Activated CD4-positive, alpha-beta T cell treated with anti-CD3 and anti-CD28 coated beads for 36 hours (primary cell): ENCODE measurements at regions of chr6 and their contacts with region 1.

Region 1: GRCh38 chr6:42745707-42746462 is at the start of gene TBCC:
- DNase-seq: peak; percentile 97
- ATAC-seq: peak; percentile 84
- H3K4me3 Mint-ChIP-seq: peak within 1 kb of the TSS; percentile 84
- H3K27ac Mint-ChIP-seq: peak within 1 kb of the TSS; percentile 100
- H3K4me1 Mint-ChIP-seq: peaks cover 27% of the 10 kb centered on the region
- H3K27me3 Mint-ChIP-seq: no peaks in the 10 kb centered on the region
- total RNA-seq, gene TBCC: 14.7 to 15.3 TPM

Region 2: DNA sequence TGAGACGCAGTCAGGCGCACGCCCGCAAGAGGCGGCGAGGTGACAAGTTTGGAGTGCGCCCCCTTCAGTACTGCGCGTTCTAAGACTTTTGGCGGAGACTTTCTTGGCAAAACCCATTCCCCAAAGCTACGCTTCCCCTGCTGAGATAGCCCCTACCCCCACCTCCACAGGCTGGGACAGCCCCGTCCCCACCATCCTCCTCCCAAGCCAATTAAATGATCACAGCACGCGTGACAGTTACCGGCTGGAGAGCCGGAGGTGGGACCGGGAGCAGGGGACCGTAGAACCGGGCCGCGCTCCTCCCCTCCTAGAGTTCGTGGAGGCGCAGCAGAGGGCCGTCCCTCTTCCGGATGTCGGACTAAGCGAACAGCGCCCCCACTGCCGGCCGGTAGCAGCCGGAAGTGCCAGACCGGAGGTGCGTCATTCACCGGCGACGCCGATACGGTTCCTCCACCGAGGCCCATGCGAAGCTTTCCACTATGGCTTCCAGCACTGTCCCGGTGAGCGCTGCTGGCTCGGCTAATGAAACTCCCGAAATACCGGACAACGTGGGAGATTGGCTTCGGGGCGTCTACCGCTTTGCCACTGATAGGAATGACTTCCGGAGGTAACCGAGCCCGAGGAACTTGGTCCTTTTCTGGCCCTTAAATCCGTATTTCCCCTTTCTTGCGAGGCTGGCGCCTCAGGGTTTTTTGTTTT is 958.5 kb before region 1 on chr6 and contains the start of gene TOMM6:
- CTCF ChIA-PET with region 1: no interaction called
- POLR2A ChIA-PET with region 1: interaction called, 3 read pairs
- intact Hi-C with region 1: loop called in 1 of 2 experiments (anchors 1 kb)
- DNase-seq: peak; percentile 98
- ATAC-seq: peak; percentile 86
- H3K4me3 Mint-ChIP-seq: peak within 1 kb of the TSS; percentile 96
- H3K27ac Mint-ChIP-seq: peak within 1 kb of the TSS; percentile 98
- H3K4me1 Mint-ChIP-seq: peaks cover 19% of the 10 kb centered on the region
- H3K27me3 Mint-ChIP-seq: peaks cover 2% of the 10 kb centered on the region
- total RNA-seq, gene TOMM6: 282 to 345 TPM

Region 3: GRCh38 chr6:42217519-42218367 is 528.1 kb before region 1 on chr6 and contains the start of gene MRPS10:
- CTCF ChIA-PET with region 1: interaction called, 3 read pairs
- POLR2A ChIA-PET with region 1: no interaction called
- intact Hi-C with region 1: loop called in 1 of 2 experiments (anchors 5 kb)
- DNase-seq: peak; percentile 95
- ATAC-seq: peak; percentile 99
- H3K4me3 Mint-ChIP-seq: peak within 1 kb of the TSS; percentile 100
- H3K27ac Mint-ChIP-seq: peak within 1 kb of the TSS; percentile 95
- H3K4me1 Mint-ChIP-seq: peaks cover 32% of the 10 kb centered on the region
- H3K27me3 Mint-ChIP-seq: no peaks in the 10 kb centered on the region
- total RNA-seq, gene MRPS10: 35.2 to 36.2 TPM

Region 4: GRCh38 chr6:42771741-42772100 is 25.8 kb after region 1 on chr6:
- CTCF ChIA-PET with region 1: interaction called, 11 read pairs
- POLR2A ChIA-PET with region 1: interaction called, 26 read pairs
- intact Hi-C with region 1: loop called (anchors 1 kb)
- DNase-seq: no peak
- ATAC-seq: no peak
- H3K4me3 Mint-ChIP-seq: peak overlapping the region; percentile 70
- H3K27ac Mint-ChIP-seq: peak overlapping the region; percentile 99
- H3K4me1 Mint-ChIP-seq: peaks cover 58% of the 10 kb centered on the region
- H3K27me3 Mint-ChIP-seq: no peaks in the 10 kb centered on the region

Region 5: DNA sequence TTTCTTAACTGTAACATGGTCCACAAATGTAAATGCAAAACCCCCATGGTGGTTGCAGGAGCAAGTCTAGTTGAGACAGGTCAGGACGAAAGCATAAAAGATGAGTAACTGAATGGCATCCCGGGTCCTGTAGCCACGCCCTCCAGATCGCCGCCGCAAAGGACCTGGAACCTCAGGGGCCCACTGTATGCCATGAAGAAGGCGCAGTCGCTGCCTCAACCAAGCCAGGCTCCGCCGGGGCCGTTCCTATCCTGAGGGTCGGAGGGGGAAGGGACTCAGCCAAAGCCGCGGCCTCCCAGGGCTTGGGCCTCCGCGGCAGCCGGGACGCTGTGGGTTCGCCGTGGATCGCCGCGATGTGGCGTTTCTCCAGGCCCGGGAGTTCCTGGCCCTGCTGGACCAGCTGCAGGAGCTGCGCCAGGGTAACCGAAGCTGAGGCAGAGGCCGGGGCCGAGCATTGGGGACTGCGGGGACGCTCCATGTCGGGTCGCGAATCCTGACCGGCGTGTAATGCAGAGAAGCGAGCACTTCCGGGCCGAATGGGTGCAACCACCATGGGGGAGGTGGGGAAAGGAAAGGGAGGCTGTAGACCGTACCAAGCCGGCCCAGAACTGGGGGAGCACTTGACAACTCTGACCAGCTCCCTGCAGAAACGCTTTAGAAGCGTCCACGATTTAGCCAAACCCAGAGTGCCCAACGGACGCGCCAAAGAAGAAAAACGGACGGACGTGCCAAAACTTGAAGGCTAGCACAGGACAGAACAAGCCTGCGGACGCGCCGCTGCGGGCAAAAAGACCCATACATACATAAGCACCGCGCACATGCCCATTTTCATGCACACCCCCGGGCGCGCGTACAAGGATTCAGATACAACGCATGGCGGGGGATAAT is 144.7 kb after region 1 on chr6:
- CTCF ChIA-PET with region 1: interaction called, 3 read pairs
- POLR2A ChIA-PET with region 1: interaction called, 3 read pairs
- intact Hi-C with region 1: loop called in 1 of 2 experiments (anchors 1 kb)
- DNase-seq: peak; percentile 95
- ATAC-seq: peak; percentile 89
- H3K4me3 Mint-ChIP-seq: peak overlapping the region; percentile 90
- H3K27ac Mint-ChIP-seq: peak overlapping the region; percentile 98
- H3K4me1 Mint-ChIP-seq: peaks cover 31% of the 10 kb centered on the region
- H3K27me3 Mint-ChIP-seq: no peaks in the 10 kb centered on the region

Region 6: GRCh38 chr6:43013843-43014433 is 268.1 kb after region 1 on chr6 and contains the starts of genes KLHDC3 and MEA1:
- CTCF ChIA-PET with region 1: no interaction called
- POLR2A ChIA-PET with region 1: no interaction called
- intact Hi-C with region 1: loop called in 1 of 2 experiments (anchors 1 kb)
- DNase-seq: peak; percentile 99
- ATAC-seq: peak; percentile 96
- H3K4me3 Mint-ChIP-seq: peak within 1 kb of the TSS; percentile 91
- H3K27ac Mint-ChIP-seq: peak within 1 kb of the TSS; percentile 87
- H3K4me1 Mint-ChIP-seq: peaks cover 39% of the 10 kb centered on the region
- H3K27me3 Mint-ChIP-seq: no peaks in the 10 kb centered on the region
- total RNA-seq, gene KLHDC3: 58.3 to 65.2 TPM
- total RNA-seq, gene MEA1: 93.4 to 129 TPM